Transverse colon (tissue), 4 donors: ENCODE measurements at regions of chr11 and their contacts with region 1.

Region 1: DNA sequence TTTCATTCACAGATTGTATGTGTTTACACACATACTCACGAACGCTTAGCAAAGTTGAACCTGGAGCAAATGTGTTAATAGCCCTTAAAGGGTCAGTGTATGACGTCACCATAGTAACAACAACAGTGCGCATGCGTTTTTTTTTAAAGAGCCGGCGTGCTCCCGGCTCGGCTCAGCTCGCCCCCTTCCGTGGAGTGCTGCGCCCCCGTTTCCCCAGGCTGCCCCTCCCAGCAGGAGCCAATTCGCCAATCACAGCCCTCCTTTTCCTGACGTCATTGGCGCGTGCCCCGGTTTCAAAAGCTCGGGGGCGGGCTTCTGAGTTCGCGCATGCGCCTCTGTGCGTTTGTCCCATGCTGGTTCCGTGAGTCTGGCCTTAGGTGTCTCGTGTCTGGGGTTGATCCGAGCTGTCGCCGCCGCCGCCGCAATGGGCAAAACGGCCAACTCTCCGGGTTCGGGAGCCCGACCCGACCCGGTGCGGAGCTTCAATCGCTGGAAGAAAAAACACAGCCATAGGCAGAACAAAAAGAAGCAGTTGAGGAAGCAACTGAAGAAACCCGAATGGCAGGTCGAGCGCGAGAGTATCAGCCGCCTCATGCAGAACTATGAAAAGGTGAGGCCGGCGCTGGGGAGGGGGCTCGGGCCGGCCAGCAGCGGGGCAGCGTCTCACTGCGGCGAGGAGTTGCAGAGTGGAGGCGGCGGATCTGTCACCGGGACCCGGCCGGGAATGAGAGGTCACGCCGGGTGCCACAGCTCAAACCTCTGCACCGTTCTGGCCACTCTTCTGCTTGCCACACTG is at the start of gene DDX10:
- DNase-seq: peak; percentile 99
- H3K4me3 ChIP-seq: peak within 1 kb of the TSS; percentile 76 to 90 (median 83)
- H3K27ac ChIP-seq: peak within 1 kb of the TSS; percentile 51 to 79 (median 76)
- H3K4me1 ChIP-seq: peaks cover 8 to 25% (median 19%) of the 10 kb centered on the region in 4 donors
- H3K27me3 ChIP-seq: no peaks in the 10 kb centered on the region
- CTCF ChIP-seq: peak in 1 of 5 experiments; percentile 18
- EP300 ChIP-seq: no peak
- POLR2A ChIP-seq: peak; percentile 41
- total RNA-seq, gene DDX10: 7.6 to 38.2 (median 12.6) TPM

Region 2: DNA sequence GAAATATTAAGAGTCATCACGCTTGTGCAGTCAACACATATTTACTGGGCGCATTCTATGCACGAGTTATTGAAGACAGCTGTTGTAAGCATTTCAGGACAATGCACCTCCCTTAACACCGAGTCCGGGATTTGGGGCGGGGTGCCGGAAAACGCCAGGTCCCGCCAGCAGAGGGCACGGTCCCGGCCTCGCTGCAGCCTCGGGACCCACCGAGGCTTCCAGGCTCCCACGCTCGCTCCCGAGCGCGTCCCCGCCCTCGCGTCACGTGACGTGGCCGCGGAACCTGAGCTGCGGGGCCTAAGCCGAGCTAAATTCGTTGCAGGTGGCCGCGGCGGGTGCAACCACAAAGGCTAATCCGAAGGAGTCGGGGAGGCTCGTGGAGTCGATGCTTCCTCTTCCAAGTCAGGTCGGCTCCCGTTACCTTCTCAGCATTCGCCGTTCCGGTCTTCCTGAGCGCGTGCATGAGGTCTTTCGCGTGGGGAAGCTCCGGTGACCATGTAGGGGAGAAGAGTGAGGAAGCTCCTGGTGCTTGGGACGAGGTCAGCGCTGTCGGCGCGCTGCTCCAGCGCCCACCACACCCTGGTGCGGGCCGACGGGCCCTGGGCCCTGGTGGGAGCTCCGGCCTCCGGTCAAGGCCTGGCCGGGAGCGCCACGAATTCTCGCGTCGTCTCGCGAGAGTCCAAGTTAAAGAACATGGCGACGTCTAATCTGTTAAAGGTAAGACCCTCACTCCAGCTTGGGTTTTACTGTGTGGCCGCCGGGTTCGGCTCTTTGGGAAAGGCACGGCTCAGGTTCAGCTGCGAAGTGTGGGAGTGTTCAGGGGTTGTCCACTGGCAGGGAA is 656.1 kb before region 1 on chr11 and contains the start of gene CUL5:
- in situ Hi-C with region 1: loop called in 1 of 4 experiments (anchors 25 kb)
- intact Hi-C with region 1: no loop called
- DNase-seq: peak; percentile 93
- H3K4me3 ChIP-seq: peak within 1 kb of the TSS; percentile 81 to 99 (median 82)
- H3K27ac ChIP-seq: peak within 1 kb of the TSS; percentile 92 to 97 (median 97)
- H3K4me1 ChIP-seq: peaks cover 14 to 46% (median 24%) of the 10 kb centered on the region in 4 donors
- H3K27me3 ChIP-seq: no peaks in the 10 kb centered on the region
- CTCF ChIP-seq: peak; percentile 88 to 93 (median 91)
- EP300 ChIP-seq: no peak
- POLR2A ChIP-seq: peak; percentile 80
- total RNA-seq, gene CUL5: 23.8 to 33.6 (median 27.7) TPM

Region 3: DNA sequence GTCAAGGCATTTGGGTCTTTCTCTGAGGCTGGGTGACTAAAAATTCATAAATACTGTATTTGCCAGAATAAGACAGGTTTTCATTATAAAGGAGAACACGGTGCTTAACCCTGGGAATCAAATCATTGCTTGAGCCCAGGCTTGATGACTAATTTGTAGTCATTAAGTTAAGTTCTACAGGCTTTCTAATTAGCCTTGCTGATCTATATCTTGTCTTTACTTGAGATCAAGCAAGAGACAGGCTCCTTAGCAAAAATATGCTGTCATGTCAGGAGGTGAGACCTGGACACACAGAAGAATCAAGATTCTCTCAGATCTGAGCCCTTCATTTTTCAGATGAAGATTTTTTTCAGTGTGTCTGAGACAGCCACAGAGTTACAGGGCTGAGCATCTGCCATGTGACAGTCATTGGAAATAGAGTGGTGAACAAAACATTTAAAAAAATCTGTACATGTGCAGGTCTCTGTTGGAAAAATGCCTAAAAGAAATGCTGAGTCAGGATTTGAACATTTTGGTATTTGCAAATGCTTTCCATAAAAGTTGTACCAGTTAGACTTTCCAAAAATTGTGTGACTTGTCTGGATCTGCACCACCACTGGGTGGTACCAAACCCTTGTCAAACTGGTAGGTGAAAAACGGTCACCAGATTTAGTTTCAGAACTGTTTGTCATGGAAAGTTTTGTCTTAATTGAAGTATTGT is 528.9 kb before region 1 on chr11:
- in situ Hi-C with region 1: loop called in 1 of 4 experiments (anchors 25 kb)
- intact Hi-C with region 1: no loop called
- DNase-seq: no peak
- H3K4me3 ChIP-seq: no peak overlapping the region
- H3K27ac ChIP-seq: no peak overlapping the region
- H3K4me1 ChIP-seq: no peaks in the 10 kb centered on the region
- H3K27me3 ChIP-seq: no peaks in the 10 kb centered on the region
- CTCF ChIP-seq: no peak
- EP300 ChIP-seq: no peak
- POLR2A ChIP-seq: no peak

Region 4: DNA sequence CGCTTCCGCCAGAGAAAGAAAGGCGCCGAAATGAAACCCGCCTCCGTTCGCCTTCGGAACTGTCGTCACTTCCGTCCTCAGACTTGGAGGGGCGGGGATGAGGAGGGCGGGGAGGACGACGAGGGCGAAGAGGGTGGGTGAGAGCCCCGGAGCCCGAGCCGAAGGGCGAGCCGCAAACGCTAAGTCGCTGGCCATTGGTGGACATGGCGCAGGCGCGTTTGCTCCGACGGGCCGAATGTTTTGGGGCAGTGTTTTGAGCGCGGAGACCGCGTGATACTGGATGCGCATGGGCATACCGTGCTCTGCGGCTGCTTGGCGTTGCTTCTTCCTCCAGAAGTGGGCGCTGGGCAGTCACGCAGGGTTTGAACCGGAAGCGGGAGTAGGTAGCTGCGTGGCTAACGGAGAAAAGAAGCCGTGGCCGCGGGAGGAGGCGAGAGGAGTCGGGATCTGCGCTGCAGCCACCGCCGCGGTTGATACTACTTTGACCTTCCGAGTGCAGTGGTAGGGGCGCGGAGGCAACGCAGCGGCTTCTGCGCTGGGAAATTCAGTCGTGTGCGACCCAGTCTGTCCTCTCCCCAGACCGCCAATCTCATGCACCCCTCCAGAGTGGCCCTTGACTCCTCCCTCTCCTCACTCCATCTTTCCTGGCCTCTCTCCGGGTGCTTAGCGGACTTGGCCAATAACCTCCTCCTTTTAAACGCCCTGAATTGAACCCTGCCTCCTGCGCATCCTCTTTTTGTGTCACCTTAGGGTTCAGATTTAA is 442.1 kb before region 1 on chr11 and contains the start of gene ATM:
- in situ Hi-C with region 1: loop called in 2 of 4 experiments (anchors 10 to 25 kb)
- intact Hi-C with region 1: no loop called
- DNase-seq: peak; percentile 99
- H3K4me3 ChIP-seq: peak within 1 kb of the TSS; percentile 56 to 92 (median 72)
- H3K27ac ChIP-seq: peak within 1 kb of the TSS; percentile 91 to 96 (median 94)
- H3K4me1 ChIP-seq: peaks cover 8 to 63% (median 29%) of the 10 kb centered on the region in 4 donors
- H3K27me3 ChIP-seq: no peaks in the 10 kb centered on the region
- CTCF ChIP-seq: peak; percentile 60 to 90 (median 69)
- EP300 ChIP-seq: no peak
- POLR2A ChIP-seq: peak; percentile 3
- total RNA-seq, gene ATM: 31.7 to 135 (median 88.5) TPM

Region 5: DNA sequence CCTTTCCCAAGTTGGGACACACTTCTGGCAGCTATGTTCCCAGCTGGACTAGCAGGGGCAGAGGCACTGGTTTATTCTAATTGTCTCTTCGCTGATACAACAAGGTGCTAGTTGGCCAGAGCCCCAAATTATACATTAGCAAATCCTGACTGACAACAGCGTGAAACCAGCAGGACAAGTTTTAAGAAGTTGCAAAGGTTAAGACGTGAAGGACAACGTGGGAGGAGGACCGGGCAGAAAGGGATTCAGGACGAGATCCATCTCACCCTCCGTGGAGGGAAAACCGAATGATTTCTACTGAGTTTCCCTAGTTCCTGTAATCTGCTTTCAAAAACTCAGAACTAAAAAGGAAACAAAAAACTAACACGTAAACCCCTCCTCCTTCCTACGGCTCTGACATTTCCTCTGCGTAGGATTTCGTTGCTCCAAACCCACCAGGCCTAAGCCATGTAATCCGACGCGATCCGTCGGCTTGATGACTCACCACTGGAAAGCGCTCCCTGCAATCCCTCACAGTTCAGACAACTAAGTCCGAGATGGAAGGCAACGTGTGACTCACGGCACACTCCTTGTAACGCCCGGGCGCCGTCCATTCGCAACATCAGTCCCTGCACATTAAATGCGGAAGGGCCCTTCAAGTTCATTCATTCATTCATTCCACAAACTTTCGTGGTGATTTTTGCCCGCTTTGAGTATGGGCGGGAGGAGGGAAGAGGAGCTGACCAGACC is 167.4 kb before region 1 on chr11:
- in situ Hi-C with region 1: loop called in 1 of 4 experiments (anchors 10 kb)
- intact Hi-C with region 1: no loop called
- DNase-seq: peak; percentile 87
- H3K4me3 ChIP-seq: peak overlapping the region; percentile 68 to 78 (median 74)
- H3K27ac ChIP-seq: peak overlapping the region; percentile 95 to 98 (median 96)
- H3K4me1 ChIP-seq: peaks cover 0 to 32% (median 9%) of the 10 kb centered on the region in 4 donors
- H3K27me3 ChIP-seq: no peaks in the 10 kb centered on the region
- CTCF ChIP-seq: no peak
- EP300 ChIP-seq: peak; percentile 2
- POLR2A ChIP-seq: peak; percentile 75

Region 6: GRCh38 chr11:108620958-108621772 is 43.8 kb before region 1 on chr11:
- in situ Hi-C with region 1: no loop called
- intact Hi-C with region 1: no loop called
- DNase-seq: no peak
- H3K4me3 ChIP-seq: no peak overlapping the region
- H3K27ac ChIP-seq: peak overlapping the region; percentile 52 to 79 (median 76)
- H3K4me1 ChIP-seq: peaks cover 5 to 44% (median 22%) of the 10 kb centered on the region in 4 donors
- H3K27me3 ChIP-seq: no peaks in the 10 kb centered on the region
- CTCF ChIP-seq: no peak
- EP300 ChIP-seq: no peak
- POLR2A ChIP-seq: no peak